ENCODE measurements at regions of chr14 and their contacts with region 1.

Region 1: DNA sequence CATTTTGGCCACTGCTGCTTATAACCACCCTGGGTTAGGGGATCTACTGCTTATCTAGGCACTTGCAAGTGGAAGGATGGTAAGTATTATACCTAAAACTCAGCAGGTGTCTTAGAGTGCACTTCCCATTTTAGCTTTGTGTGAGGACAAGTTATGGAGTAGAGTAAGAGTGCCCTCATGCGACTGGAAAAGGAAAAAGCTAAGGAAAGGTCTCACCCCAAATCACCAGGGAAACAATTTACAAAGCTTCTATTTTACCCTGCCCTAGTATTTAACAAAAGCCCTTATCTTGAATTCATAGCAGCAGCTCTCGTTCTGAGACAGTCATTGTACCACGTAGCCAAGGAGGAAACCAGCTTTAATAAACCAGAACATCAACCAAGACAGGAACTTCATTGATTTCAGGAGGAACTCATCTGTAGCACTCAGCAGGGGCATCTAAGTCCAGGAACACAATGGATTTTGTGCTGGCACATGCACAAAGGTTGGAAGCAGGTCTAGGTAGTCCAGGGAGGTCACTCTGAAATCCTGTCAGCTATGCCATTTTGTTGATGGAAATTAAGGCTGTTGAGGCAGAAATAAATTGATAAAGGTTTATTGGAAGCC is 2.9 kb downstream of the RDH12 start:
- DNase-seq: peak; percentile 59
- H3K4me3 Mint-ChIP-seq: no peak overlapping the region
- H3K27ac Mint-ChIP-seq: no peak overlapping the region
- H3K4me1 Mint-ChIP-seq: no peaks in the 10 kb centered on the region
- H3K27me3 Mint-ChIP-seq: no peaks in the 10 kb centered on the region

Region 2: GRCh38 chr14:67526676-67527459 is 177.7 kb before region 1 on chr14:
- CTCF ChIA-PET with region 1: interaction called, 35 read pairs
- intact Hi-C with region 1: loop called (anchors 1 kb)
- DNase-seq: peak; percentile 67
- H3K4me3 Mint-ChIP-seq: no peak overlapping the region
- H3K27ac Mint-ChIP-seq: no peak overlapping the region
- H3K4me1 Mint-ChIP-seq: no peaks in the 10 kb centered on the region
- H3K27me3 Mint-ChIP-seq: peaks cover 14% of the 10 kb centered on the region

Region 3: GRCh38 chr14:67583711-67584644 is 120.6 kb before region 1 on chr14:
- CTCF ChIA-PET with region 1: interaction called, 90 read pairs
- intact Hi-C with region 1: loop called (anchors 1 kb)
- DNase-seq: peak; percentile 61
- H3K4me3 Mint-ChIP-seq: no peak overlapping the region
- H3K27ac Mint-ChIP-seq: no peak overlapping the region
- H3K4me1 Mint-ChIP-seq: no peaks in the 10 kb centered on the region
- H3K27me3 Mint-ChIP-seq: no peaks in the 10 kb centered on the region

Region 4: DNA sequence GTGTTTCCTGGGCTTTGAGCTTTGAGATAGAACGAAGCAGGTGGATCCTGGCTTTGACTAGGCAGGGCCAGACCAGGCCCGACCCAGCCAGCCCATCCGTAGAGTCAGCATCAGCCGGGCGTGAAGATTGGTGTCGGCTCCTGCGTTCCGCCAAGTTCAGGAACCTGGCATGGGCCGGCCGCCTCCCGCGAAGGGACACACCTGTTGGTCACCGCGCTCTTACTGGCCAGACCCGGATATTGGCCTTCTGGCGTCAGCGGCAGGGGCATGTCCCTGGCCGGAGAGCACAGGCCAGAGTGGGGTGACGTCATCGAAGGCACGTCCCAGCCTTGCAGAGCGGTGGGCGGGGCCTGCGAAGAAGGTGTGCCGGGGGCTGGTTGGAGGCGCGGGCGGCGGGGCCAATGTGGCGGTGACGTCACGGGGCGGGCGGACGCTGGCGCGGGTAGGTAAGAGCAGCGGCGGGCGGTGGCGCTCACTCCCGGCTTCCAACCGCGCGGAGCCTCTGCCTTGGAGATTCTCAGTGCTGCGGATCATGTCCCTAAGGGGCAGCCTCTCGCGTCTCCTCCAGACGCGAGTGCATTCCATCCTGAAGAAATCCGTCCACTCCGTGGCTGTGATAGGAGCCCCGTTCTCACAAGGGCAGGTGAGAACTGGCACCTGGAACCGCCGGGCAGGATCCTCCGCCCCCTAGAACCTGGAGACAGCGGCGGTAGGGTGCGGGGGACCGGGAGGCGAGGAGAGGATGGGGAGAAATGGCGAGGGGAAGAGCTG is 85.0 kb before region 1 on chr14 and contains the start of gene ARG2:
- CTCF ChIA-PET with region 1: interaction called, 134 read pairs
- intact Hi-C with region 1: loop called (anchors 1 kb)
- DNase-seq: peak; percentile 98
- H3K4me3 Mint-ChIP-seq: peak within 1 kb of the TSS; percentile 87
- H3K27ac Mint-ChIP-seq: peak within 1 kb of the TSS; percentile 69
- H3K4me1 Mint-ChIP-seq: peaks cover 42% of the 10 kb centered on the region
- H3K27me3 Mint-ChIP-seq: peaks cover 4% of the 10 kb centered on the region
- total RNA-seq, gene ARG2: 20.3 to 20.8 TPM

Region 5: DNA sequence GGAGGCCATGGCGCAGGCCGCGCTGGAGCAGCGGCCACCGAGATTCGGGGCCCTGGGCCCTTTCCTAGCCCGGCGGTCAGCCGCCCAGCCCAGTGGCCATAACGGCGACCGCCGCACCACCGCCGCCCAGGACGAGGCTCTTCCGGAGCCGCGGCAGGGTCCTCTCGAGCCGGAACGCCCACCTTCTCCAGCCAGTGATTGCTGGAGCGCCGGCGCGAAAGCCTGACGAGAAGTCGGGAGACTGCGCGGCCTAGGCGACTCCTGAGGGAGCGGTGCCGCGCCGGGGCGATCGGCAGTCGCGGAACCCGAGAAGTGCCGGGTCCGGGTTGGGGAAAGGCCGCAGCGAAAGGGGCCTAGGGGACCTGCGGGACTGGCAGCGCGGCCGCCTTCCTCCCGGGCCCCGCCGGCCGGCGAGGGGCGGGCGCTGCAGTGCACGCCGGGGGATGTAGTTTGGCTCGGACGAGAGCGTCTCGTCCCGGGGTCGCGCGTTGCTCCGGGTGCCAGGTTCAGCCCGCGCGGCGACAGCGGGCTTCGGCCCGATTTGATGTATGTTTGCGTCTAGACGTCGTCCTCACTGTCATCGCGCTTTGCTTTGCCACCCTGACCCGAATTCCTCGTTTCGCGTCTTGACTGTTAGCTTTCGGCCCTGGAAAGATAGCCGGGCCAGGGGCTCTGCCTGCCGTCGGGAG is 30.0 kb before region 1 on chr14 and contains the start of gene VTI1B:
- CTCF ChIA-PET with region 1: interaction called, 14 read pairs
- intact Hi-C with region 1: no loop called
- DNase-seq: peak; percentile 68
- H3K4me3 Mint-ChIP-seq: peak within 1 kb of the TSS; percentile 80
- H3K27ac Mint-ChIP-seq: peak within 1 kb of the TSS; percentile 66
- H3K4me1 Mint-ChIP-seq: peaks cover 34% of the 10 kb centered on the region
- H3K27me3 Mint-ChIP-seq: no peaks in the 10 kb centered on the region
- total RNA-seq, gene VTI1B: 74.2 to 78.3 TPM

Region 6: GRCh38 chr14:67800743-67801142 is 96.2 kb after region 1 on chr14:
- CTCF ChIA-PET with region 1: no interaction called
- intact Hi-C with region 1: no loop called
- DNase-seq: no peak
- H3K4me3 Mint-ChIP-seq: no peak overlapping the region
- H3K27ac Mint-ChIP-seq: no peak overlapping the region
- H3K4me1 Mint-ChIP-seq: no peaks in the 10 kb centered on the region
- H3K27me3 Mint-ChIP-seq: no peaks in the 10 kb centered on the region

Region 7: DNA sequence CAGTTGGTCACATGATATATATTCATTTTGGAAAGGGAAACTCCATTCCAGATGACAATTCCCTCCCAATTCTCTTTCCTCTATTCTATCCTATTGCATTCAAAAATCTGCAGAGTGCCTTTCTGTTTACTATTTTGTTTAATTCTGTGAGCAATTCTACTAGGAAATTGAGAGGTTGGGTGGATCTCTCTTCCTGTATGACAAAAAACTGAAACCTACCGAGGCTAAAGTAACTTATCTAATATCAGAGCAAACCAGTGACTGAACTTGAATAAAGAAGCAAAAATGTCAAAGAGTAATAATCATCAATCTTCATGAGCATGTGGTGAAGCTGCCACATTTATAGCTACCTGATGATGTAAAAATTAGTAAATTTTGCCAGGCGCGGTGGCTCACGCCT is 1291.1 kb after region 1 on chr14:
- CTCF ChIA-PET with region 1: no interaction called
- intact Hi-C with region 1: no loop called
- DNase-seq: no peak
- H3K4me3 Mint-ChIP-seq: no peak overlapping the region
- H3K27ac Mint-ChIP-seq: no peak overlapping the region
- H3K4me1 Mint-ChIP-seq: peaks cover 9% of the 10 kb centered on the region
- H3K27me3 Mint-ChIP-seq: no peaks in the 10 kb centered on the region